Activated CD8-positive, alpha-beta T cell treated with anti-CD3 and anti-CD28 coated beads, Interleukin-2, amount 10 ng/mL, durations not matched to agents 7 days and 5 days (primary cell): ENCODE measurements at regions of chr16 and their contacts with region 1.

Region 1: DNA sequence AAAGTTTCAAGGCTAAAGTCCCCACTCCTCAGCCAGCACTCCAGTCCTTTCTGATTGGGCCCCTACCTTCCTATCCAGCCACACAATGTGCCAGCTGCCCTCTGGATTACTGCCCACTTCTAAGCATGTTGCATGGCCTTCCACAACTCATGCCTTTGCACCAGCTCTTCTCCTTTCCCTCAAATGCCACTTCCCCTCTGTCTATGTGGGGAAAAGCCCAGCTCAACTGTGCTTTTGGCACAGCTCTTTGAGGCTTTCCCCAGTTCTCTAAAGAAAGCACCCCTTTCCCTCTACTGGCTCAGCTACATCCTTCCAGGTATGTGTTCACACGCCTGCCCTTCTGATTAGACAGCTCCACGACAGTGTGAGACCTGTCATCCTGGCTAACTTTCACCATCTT is 18.5 kb downstream of the GTF3C1 start:
- DNase-seq: no peak
- ATAC-seq: no peak
- H3K4me3 Mint-ChIP-seq: no peak overlapping the region
- H3K27ac Mint-ChIP-seq: peak overlapping the region; percentile 22
- H3K4me1 Mint-ChIP-seq: peaks cover 17% of the 10 kb centered on the region
- H3K27me3 Mint-ChIP-seq: no peaks in the 10 kb centered on the region

Region 2: DNA sequence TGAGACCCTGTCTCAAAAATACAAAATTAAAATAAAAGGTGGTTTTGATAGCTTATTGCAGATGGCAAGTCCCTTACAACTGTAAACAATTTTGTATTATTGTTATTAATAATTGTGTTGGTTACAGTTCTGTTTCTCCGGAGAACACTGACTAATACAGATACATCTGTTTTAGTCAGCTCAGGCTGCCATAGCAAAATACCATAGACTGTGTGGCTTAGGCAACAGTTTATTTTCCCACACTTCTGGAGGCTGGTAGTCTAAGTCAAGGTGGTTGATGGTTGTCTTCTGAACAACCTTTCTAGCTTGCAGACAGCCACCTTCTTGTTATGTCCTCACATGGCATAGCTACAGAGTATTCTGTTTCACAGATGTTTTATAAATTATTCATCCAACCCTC is 143.5 kb before region 1 on chr16:
- CTCF ChIA-PET with region 1: no interaction called
- POLR2A ChIA-PET with region 1: no interaction called
- DNase-seq: no peak
- ATAC-seq: no peak
- H3K4me3 Mint-ChIP-seq: no peak overlapping the region
- H3K27ac Mint-ChIP-seq: no peak overlapping the region
- H3K4me1 Mint-ChIP-seq: peaks cover 12% of the 10 kb centered on the region
- H3K27me3 Mint-ChIP-seq: no peaks in the 10 kb centered on the region

Region 3: GRCh38 chr16:27549859-27550581 is 18.8 kb after region 1 on chr16 and contains the starts of genes GTF3C1 and KATNIP:
- CTCF ChIA-PET with region 1: no interaction called
- POLR2A ChIA-PET with region 1: interaction called, 11 read pairs
- DNase-seq: peak; percentile 100
- ATAC-seq: peak; percentile 95
- H3K4me3 Mint-ChIP-seq: peak within 1 kb of the TSS; percentile 98
- H3K27ac Mint-ChIP-seq: peak within 1 kb of the TSS; percentile 96
- H3K4me1 Mint-ChIP-seq: peaks cover 36% of the 10 kb centered on the region
- H3K27me3 Mint-ChIP-seq: no peaks in the 10 kb centered on the region
- total RNA-seq, gene GTF3C1: 55.8 to 58.5 TPM
- total RNA-seq, gene KATNIP: 18.6 to 19.0 TPM